ENCODE measurements at regions of chr1 and their contacts with region 1.

Region 1: DNA sequence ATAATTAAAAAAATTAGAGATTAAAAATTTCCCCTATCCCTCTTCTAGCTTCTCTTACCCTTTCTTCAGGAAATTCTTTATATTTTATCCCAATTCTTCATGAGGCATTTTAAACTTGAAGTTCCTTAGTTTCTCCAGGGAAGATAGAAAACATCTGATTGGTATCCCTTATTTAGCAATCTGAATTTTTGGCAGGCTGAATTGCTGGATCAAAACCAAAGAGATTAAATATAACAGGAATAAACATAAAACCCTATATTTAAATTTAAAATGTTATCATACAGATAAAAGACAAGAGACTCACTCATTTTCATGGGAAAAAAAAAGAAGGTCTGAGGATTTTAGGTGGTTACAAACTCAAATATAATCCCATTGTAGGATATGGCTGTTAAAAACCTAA is 204.2 kb downstream of the CHRM3 start:
- DNase-seq: no peak

Region 2: GRCh38 chr1:239686386-239686785 is 95.8 kb after region 1 on chr1:
- intact Hi-C with region 1: loop called in 1 of 2 experiments (anchors 5 kb)
- DNase-seq: no peak

Region 3: GRCh38 chr1:241253466-241253865 is 1662.9 kb after region 1 on chr1:
- intact Hi-C with region 1: no loop called
- DNase-seq: no peak